ENCODE measurements at regions of chr20 and their contacts with region 1.

Region 1: DNA sequence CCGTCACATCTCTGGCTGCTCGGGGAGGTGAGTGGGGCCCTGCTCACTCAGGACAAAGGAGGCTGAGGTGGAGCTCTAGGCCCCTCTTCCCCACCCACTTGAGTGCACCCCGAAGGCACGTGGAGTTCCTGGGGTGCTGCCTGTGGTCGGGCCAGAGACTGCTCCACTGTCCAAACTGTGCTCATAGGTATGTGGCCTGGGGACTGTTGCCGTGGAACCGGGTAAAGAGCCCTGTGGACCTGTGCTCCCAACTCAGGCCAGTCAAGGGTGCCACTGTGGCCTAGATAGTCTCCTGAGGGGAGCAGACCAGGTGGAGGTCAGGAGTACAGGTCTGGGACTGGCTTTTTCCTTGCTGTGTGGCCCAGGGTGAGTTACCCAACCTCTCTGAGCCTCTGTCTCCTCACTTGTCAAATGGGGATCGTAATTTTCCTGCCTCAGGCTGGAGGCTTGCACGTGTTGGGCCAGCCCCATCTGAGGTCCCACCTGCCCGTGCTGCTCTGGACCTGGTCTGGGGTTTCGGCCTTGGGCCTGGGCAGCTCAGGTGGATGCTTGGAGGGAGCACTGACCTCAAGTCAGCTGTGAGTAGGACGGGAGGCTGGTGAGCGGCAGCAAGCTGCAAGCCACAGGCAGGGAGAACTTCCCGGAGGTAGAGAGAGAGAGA is 12.4 kb upstream of the NPBWR2 start:
- DNase-seq: peak; percentile 66

Region 2: DNA sequence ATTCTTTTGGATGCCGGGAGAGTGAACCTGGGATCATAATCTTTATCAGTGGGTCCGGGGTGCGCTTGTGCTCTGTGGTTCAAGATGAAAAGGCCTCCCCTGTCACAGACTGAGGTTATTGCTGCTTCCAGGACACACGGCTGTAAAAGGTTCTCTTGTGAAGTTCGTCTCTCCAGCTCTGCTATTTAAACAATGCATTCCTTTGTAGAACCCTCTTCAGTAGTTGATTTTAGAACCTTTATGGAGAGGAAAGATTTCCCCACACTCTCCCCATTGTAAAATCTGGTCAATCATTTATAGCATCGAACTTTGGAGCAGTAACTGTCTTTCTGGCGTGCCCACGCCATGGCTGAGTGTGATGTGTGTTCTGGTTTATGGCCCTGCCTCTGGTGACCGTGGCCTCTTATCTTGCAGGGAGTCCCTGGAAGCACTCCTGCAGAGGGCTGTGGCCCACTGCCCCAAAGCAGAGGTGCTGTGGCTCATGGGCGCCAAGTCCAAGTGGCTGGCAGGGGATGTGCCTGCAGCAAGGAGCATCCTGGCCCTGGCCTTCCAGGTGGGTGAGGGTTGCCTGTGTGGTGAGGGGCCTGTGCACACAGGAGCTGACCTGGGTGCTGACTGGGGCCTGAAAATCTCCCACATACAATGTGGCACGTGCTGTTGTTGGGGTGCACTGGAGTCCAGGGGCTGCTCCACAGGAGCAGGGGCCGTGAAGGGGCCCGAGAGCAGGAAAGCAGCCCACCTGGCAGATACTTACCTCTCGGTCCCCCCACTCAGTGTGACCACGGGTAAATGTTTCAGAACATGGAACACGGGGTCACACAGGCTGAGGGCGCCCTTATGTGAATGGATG is 95.4 kb before region 1 on chr20:
- intact Hi-C with region 1: no loop called
- DNase-seq: no peak

Region 3: DNA sequence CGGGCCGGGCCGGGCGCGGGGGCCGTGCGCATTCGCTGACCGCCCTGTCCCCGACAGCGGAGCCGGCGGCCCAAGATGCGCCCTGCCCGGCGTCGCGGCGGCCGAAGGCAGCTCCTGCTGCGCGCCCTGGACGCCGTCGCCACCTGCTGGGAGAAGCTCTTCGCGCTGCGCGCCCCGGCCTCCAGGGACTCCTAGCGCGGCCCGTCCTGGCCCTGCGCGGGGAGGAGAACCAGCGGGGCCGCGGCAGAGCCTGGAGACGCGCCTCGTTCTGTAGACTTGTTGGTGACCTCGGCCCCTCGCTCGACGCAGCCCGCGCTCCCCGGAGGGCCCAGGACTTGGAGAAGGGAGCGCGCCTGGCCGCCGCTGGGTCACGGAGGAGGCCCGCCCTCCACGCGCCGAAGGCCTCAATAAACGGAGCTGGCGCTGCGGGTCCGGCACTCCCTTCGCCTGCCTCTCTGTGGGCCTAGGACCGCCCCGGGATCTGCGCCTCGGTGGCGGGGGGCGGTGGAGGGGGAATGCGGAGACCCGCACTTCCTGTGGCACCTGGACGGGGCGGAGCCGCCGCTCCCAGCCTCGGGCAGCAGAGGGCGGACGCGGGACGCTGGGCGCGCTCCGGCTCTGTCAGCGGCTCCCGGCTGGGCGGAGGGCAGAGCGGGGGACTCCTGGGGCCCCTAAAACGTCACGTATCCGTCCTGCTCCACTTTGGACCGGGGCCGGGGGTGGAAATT is 81.1 kb before region 1 on chr20:
- intact Hi-C with region 1: loop called (anchors 5 to 10 kb)
- DNase-seq: peak; percentile 91

Region 4: DNA sequence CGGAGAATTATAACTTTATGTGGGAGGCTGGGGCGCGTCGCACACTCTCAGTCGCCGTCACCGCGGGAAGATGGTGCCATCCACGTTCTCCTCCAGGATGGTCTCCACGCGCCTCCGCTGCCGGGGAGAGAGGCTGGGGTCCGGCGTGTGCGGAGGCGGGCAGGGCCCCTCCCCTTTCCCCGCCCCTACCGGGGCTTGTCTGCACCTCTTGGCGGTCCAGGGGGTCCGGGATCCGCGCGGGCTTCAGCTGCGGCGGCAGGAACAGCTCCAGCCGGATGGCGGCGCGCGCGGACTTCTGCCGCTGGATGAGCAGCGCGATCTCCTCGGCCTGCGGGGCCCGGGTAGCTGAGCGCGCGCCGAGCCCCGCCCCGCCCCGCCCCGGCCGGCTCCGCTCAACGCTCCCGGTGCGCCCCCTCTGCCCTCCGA is 36.4 kb before region 1 on chr20:
- intact Hi-C with region 1: no loop called
- DNase-seq: peak; percentile 91

Measured in posterior vena cava (tissue), 2 donors.